ENCODE measurements at regions of chr5 and their contacts with region 1.

Region 1: GRCh38 chr5:137933491-137933911 is 44.2 kb downstream of the PKD2L2 start:
- DNase-seq: no peak
- H3K4me3 ChIP-seq: no peak overlapping the region
- H3K27ac ChIP-seq: no peak overlapping the region
- H3K4me1 ChIP-seq: no peaks in the 10 kb centered on the region
- H3K27me3 ChIP-seq: no peaks in the 10 kb centered on the region
- CTCF ChIP-seq: no peak

Region 2: GRCh38 chr5:137649228-137649935 is 284.1 kb before region 1 on chr5:
- CTCF ChIA-PET with region 1: no interaction called
- POLR2A ChIA-PET with region 1: no interaction called
- intact Hi-C with region 1: no loop called
- DNase-seq: no peak
- H3K4me3 ChIP-seq: no peak overlapping the region
- H3K27ac ChIP-seq: no peak overlapping the region
- H3K4me1 ChIP-seq: no peaks in the 10 kb centered on the region
- H3K27me3 ChIP-seq: no peaks in the 10 kb centered on the region
- CTCF ChIP-seq: no peak

Region 3: DNA sequence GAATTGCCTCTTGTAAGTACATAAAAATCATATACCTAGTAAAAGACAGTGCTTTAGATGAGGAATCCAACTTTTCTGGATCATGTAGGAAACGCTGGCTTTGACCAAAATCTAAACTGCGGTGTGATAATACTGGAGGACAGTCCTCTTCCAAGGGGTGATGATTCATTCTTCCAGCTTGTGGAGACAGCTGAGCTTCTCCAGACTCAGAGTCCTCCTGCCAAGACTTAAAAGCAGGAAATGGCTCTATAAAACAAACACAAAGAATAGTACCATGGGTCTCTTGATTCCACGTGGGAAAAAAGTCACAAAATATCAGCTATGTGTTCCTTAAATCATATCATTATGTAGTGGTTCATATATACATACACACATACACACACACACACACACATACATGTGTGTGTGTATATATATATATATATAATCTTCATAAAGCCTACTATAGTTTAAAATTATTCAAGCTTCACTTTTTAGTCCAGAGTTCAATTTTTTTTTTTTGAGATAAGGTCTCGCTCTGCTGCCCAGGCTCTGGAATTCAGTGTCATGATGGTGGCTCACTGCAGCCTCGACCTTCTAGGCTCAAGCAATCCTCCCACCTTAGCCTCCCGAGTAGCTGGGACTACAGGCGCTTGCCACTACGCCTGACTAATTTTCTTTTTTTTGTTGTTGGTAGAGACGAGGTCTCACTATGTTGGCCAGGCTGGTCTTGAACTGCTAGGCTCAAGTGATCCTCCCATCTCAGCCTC is 20.8 kb after region 1 on chr5:
- CTCF ChIA-PET with region 1: no interaction called
- POLR2A ChIA-PET with region 1: interaction called, 23 read pairs
- intact Hi-C with region 1: no loop called
- DNase-seq: no peak
- H3K4me3 ChIP-seq: no peak overlapping the region
- H3K27ac ChIP-seq: no peak overlapping the region
- H3K4me1 ChIP-seq: no peaks in the 10 kb centered on the region
- H3K27me3 ChIP-seq: no peaks in the 10 kb centered on the region
- CTCF ChIP-seq: no peak